ENCODE measurements at regions of chr12 and their contacts with region 1.

Region 1: DNA sequence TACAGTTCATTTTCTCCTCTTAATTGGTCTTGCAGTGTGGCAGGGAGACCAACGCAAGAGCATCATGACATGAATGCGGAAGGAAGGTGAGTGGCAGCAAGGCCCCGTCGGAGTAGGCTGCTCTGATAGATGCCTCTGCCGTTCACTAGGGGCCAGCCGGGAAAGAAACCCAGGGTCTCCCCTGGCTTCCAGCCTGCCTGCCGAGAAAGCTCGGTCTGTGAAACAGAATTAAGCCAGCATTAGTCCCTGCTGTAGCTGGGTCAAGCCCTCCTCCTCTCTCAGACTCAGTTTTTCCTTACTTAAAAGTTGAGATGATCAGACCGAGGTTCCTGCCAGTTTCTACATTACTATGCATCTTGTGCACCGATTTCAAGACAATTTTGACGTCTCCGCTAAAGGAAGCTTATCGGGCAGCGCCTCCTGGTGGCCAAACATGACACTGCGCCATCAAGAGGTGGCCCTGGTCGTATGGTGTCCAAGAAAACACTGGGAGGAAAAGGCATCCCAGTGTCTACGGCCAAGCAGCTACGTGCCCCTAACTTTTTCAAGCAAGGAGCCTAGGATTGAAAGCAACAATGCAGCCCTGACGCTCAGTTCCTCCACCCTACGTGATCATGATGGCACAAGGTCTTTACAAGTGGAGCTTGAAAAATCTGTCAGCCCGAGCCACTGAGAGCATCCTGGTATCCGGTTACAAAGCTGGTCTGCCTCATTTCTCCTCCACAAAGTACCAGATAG is 131.6 kb downstream of the KSR2 start:
- DNase-seq: peak; percentile 71 to 86
- H3K4me3 ChIP-seq: no peak overlapping the region
- H3K27ac ChIP-seq: no peak overlapping the region
- H3K4me1 ChIP-seq: no peaks in the 10 kb centered on the region
- H3K27me3 ChIP-seq: peaks cover 0 to 36% of the 10 kb centered on the region in 2 donors
- CTCF ChIP-seq: peak; percentile 83 to 90

Region 2: DNA sequence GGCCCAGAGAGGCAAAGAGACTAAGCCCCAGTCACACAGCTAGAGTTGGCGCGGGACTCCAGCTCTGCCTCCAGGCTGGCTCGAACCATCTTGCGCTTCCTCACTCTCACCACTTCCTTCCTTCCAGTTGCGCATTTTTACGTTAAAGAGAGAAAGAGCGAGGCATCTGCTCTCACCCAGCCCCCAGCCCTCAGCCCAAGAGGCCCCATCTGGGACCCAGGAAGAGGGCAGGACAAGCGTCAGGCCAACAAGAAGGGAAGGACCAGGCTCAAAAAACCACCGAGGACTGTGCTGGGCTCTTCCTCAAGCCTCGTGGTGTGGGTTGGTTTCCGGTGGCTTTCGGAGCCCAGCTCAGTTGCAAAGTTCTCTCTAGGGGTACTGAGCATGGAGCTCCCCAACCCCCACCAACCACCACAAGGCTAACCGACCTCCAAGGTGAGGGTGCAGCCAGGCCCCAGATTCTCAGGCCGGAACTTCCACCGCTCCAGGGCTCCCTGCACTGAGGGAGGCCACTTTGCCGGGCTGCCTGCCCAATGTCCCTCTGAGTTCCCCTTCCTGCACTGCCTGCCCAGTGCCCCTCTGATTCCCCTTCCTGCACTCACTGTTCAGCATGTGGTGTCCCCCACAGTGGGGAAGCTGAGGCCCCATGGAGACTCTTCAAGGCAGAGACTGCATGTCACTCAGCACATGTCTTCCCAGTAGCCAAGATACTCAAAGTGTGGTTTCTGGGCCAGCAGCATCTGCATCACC is 773.8 kb before region 1 on chr12:
- intact Hi-C with region 1: no loop called
- DNase-seq: peak in 1 of 2 donors; percentile 30
- H3K4me3 ChIP-seq: no peak overlapping the region
- H3K27ac ChIP-seq: no peak overlapping the region
- H3K4me1 ChIP-seq: no peaks in the 10 kb centered on the region
- H3K27me3 ChIP-seq: peaks cover 0 to 3% of the 10 kb centered on the region in 2 donors
- CTCF ChIP-seq: no peak

Region 3: GRCh38 chr12:117209626-117210025 is 627.5 kb before region 1 on chr12:
- intact Hi-C with region 1: loop called (anchors 2 kb)
- DNase-seq: no peak
- H3K4me3 ChIP-seq: no peak overlapping the region
- H3K27ac ChIP-seq: no peak overlapping the region
- H3K4me1 ChIP-seq: no peaks in the 10 kb centered on the region
- H3K27me3 ChIP-seq: peaks cover 0 to 38% of the 10 kb centered on the region in 2 donors
- CTCF ChIP-seq: no peak

Region 4: DNA sequence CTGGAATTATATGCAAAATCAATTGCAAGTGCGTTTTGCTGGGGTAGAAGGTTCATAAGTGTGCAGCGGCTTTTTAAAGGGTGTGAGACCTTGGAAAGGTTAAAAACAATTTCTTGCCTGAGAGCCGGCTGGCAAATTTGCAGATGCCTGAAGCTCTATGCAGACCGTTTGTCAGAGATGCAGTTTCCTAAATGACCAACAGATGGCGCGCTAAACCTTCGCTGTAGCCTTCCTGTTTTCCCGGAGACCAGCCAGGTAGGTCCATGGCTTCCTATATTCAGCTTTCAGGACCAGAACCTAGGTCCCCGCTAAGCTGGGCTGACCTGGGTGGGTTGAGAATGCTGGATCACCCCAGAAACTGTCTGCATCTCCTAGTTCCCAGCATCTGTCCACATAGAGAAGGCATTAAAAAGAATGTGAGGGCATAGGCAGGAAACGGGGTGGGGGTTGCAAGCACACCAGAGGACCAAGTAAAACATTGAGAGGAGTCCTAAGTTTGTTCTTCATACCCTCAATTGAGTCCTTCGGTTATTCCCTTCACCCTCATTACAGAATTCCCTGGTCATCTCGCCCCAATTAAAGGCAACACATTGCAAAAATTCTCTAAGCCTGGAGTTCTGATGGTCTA is 470.0 kb before region 1 on chr12:
- intact Hi-C with region 1: loop called (anchors 5 kb)
- DNase-seq: peak; percentile 47 to 71
- H3K4me3 ChIP-seq: no peak overlapping the region
- H3K27ac ChIP-seq: no peak overlapping the region
- H3K4me1 ChIP-seq: no peaks in the 10 kb centered on the region
- H3K27me3 ChIP-seq: peaks cover 0 to 32% of the 10 kb centered on the region in 2 donors
- CTCF ChIP-seq: peak; percentile 67 to 79

Region 5: DNA sequence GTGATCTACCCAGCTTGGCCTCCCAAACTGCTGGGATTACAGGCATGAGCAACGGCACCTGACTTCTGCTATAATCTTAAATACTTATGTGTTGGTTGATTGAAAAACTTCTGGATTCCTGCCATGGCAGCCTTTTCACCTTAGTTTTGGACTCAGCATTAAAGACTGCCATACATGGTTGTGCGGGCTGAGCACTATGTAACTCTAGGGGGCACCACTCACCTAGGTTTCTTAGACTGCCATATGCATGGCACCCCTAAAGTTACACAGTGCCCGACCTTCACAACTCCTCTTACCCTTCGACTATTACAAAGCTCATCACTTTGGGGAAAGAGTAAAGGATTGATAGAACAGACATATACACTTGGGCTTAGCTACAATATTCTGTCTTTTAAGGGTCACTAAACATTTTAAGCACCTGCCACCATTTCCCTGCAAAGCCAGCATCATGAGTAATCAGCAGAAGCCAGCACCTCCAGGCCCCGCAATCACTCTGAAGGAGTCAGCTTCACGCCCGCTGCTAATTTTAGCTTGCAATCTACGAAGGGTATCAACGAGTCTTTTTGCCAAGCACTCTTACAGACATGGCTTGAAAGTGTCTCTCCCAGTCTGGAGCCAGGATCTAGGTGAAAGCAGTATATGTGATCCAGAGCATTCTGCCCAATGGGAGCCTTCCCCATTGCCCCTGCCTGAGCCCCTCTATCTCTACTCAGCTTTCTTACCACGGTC is 599.0 kb after region 1 on chr12:
- intact Hi-C with region 1: no loop called
- DNase-seq: no peak
- H3K4me3 ChIP-seq: no peak overlapping the region
- H3K27ac ChIP-seq: no peak overlapping the region
- H3K4me1 ChIP-seq: no peaks in the 10 kb centered on the region
- H3K27me3 ChIP-seq: no peaks in the 10 kb centered on the region
- CTCF ChIP-seq: no peak